K562 (cell line): ENCODE measurements at regions of chr10 and their contacts with region 1.

Region 1: DNA sequence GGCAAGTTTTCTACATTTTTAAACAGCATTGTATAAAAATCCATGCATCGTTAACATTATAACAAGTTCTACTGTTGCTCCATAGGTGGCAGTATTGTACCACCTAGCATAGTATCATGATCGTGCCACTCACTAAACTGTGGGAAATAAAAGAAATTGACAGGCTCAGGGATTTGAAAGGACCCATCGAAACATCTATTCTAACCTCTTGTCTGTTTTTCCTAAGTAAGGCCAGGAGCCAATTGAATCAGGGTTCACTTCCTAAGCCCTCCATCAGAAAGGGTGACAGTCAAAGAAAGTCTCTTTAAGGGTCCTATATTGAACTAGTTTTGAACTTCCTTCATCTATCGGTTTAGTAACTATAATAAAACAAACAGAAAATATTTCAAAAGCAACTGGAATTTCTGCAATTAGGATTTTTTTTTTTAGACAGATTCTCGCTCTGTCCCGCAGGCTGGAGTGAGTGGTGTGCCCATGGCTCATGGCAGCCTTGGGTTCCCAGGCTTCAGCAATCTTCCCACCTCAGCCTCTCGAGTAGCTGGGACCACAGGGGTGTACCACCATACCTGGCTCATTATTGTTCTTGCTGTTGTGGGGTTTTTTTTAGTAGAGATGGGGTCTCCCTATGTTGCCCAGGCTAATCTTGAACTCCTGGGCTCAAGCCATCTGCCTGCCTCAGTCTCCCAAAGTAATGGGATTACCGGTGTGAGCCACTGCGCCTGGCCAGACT is 9.4 kb downstream of the HACD1 start:
- DNase-seq: peak; percentile 47 to 71 (median 52)
- ATAC-seq: peak; percentile 94
- H3K4me3 ChIP-seq: no peak overlapping the region
- H3K27ac ChIP-seq: no peak overlapping the region
- H3K4me1 ChIP-seq: peaks cover 0 to 2% of the 10 kb centered on the region in 2 experiments; a peak in 2 of 5 replicates
- H3K27me3 ChIP-seq: no peaks in the 10 kb centered on the region
- CTCF ChIP-seq: peak; percentile 69 to 90 (median 74)
- EP300 ChIP-seq: no peak
- POLR2A ChIP-seq: no peak
- RAD21 ChIP-seq: peak; percentile 90 to 95

Region 2: GRCh38 chr10:17023386-17024298 is 584.1 kb before region 1 on chr10:
- CTCF ChIA-PET with region 1: no interaction called
- POLR2A ChIA-PET with region 1: no interaction called
- in situ Hi-C with region 1: no loop called
- intact Hi-C with region 1: no loop called
- DNase-seq: peak; percentile 27 to 86 (median 49)
- ATAC-seq: peak; percentile 94
- H3K4me3 ChIP-seq: no peak overlapping the region
- H3K27ac ChIP-seq: peak overlapping the region; percentile 35; the same call in 1 of the 3 replicates
- H3K4me1 ChIP-seq: peaks cover 4 to 22% of the 10 kb centered on the region in 2 experiments; a peak in 3 of 5 replicates
- H3K27me3 ChIP-seq: no peaks in the 10 kb centered on the region
- CTCF ChIP-seq: no peak
- EP300 ChIP-seq: peak; percentile 52; the same call in 1 of the 2 replicates
- POLR2A ChIP-seq: no peak
- RAD21 ChIP-seq: peak in 1 of 2 experiments; percentile 17; a peak in 1 of 4 replicates

Region 3: DNA sequence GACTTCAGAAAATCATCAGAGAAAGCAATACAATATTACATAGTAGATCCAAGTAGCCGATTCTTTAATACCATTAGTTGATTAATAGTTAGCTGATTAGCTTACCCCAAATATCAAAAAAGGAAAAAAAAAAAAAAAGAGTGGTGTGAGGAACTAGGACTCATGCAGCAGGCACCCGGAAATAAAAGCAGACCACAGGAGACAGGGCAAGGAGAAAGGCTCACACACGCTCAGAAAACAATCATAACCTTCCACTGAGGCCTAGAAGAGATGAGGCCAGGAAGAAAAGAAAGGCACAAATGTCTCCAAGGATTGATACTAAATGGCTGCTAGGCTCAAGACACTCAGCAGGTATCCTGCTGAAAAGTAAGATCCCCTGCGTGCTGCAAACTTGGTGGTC is 432.2 kb before region 1 on chr10:
- CTCF ChIA-PET with region 1: no interaction called
- POLR2A ChIA-PET with region 1: no interaction called
- in situ Hi-C with region 1: no loop called
- intact Hi-C with region 1: no loop called
- DNase-seq: no peak
- ATAC-seq: peak; percentile 58; the same call in 2 of the 3 replicates
- H3K4me3 ChIP-seq: no peak overlapping the region
- H3K27ac ChIP-seq: peak overlapping the region; percentile 9; the same call in 1 of the 3 replicates
- H3K4me1 ChIP-seq: peaks cover 0 to 3% of the 10 kb centered on the region in 2 experiments; a peak in 2 of 5 replicates
- H3K27me3 ChIP-seq: no peaks in the 10 kb centered on the region
- CTCF ChIP-seq: no peak
- EP300 ChIP-seq: no peak
- POLR2A ChIP-seq: no peak
- RAD21 ChIP-seq: no peak

Region 4: GRCh38 chr10:17394854-17395253 is 212.9 kb before region 1 on chr10:
- CTCF ChIA-PET with region 1: no interaction called
- POLR2A ChIA-PET with region 1: no interaction called
- in situ Hi-C with region 1: no loop called
- intact Hi-C with region 1: no loop called
- DNase-seq: peak in 1 of 4 experiments; percentile 26
- ATAC-seq: peak; percentile 61
- H3K4me3 ChIP-seq: no peak overlapping the region
- H3K27ac ChIP-seq: no peak overlapping the region
- H3K4me1 ChIP-seq: peaks cover 0 to 8% of the 10 kb centered on the region in 2 experiments; a peak in 2 of 5 replicates
- H3K27me3 ChIP-seq: no peaks in the 10 kb centered on the region
- CTCF ChIP-seq: no peak
- EP300 ChIP-seq: no peak
- POLR2A ChIP-seq: no peak
- RAD21 ChIP-seq: no peak

Region 5: GRCh38 chr10:17742918-17743317 is 135.2 kb after region 1 on chr10:
- CTCF ChIA-PET with region 1: interaction called, 10 read pairs
- POLR2A ChIA-PET with region 1: no interaction called
- in situ Hi-C with region 1: loop called (anchors 5 kb)
- intact Hi-C with region 1: loop called (anchors 1 kb)
- DNase-seq: peak; percentile 56 to 74 (median 58)
- ATAC-seq: peak; percentile 77
- H3K4me3 ChIP-seq: no peak overlapping the region
- H3K27ac ChIP-seq: no peak overlapping the region
- H3K4me1 ChIP-seq: peaks cover 4 to 5% of the 10 kb centered on the region in 2 experiments; a peak in 2 of 5 replicates
- H3K27me3 ChIP-seq: no peaks in the 10 kb centered on the region
- CTCF ChIP-seq: peak; percentile 68 to 84 (median 78)
- EP300 ChIP-seq: no peak
- POLR2A ChIP-seq: no peak
- RAD21 ChIP-seq: peak; percentile 64 to 72

Region 6: GRCh38 chr10:17847585-17848296 is 240.0 kb after region 1 on chr10:
- CTCF ChIA-PET with region 1: no interaction called
- POLR2A ChIA-PET with region 1: no interaction called
- in situ Hi-C with region 1: no loop called
- intact Hi-C with region 1: loop called (anchors 10 kb)
- DNase-seq: peak in 3 of 4 experiments; percentile 10 to 23 (median 14)
- ATAC-seq: peak; percentile 49; the same call in 1 of the 3 replicates
- H3K4me3 ChIP-seq: no peak overlapping the region
- H3K27ac ChIP-seq: no peak overlapping the region
- H3K4me1 ChIP-seq: no peaks in the 10 kb centered on the region
- H3K27me3 ChIP-seq: peaks cover 0 to 6% of the 10 kb centered on the region in 2 experiments; a peak in 4 of 5 replicates
- CTCF ChIP-seq: peak; percentile 36 to 63 (median 39); a peak in 4 of 6 replicates
- EP300 ChIP-seq: no peak
- POLR2A ChIP-seq: no peak
- RAD21 ChIP-seq: peak in 1 of 2 experiments; percentile 44; a peak in 2 of 4 replicates

Region 7: GRCh38 chr10:17872191-17873091 is 264.7 kb after region 1 on chr10:
- CTCF ChIA-PET with region 1: interaction called, 7 read pairs
- POLR2A ChIA-PET with region 1: no interaction called
- in situ Hi-C with region 1: loop called (anchors 10 kb)
- intact Hi-C with region 1: loop called (anchors 1 kb)
- DNase-seq: peak in 1 of 4 experiments; percentile 20
- ATAC-seq: 0 out of 3 replicates have a peak, but pooled peaks have one; percentile 38
- H3K4me3 ChIP-seq: no peak overlapping the region
- H3K27ac ChIP-seq: no peak overlapping the region
- H3K4me1 ChIP-seq: no peaks in the 10 kb centered on the region
- H3K27me3 ChIP-seq: no peaks in the 10 kb centered on the region; a peak in 1 of 5 replicates
- CTCF ChIP-seq: peak; percentile 29 to 70 (median 61); a peak in 5 of 6 replicates
- EP300 ChIP-seq: no peak
- POLR2A ChIP-seq: no peak
- RAD21 ChIP-seq: peak; percentile 76 to 85

Region 8: DNA sequence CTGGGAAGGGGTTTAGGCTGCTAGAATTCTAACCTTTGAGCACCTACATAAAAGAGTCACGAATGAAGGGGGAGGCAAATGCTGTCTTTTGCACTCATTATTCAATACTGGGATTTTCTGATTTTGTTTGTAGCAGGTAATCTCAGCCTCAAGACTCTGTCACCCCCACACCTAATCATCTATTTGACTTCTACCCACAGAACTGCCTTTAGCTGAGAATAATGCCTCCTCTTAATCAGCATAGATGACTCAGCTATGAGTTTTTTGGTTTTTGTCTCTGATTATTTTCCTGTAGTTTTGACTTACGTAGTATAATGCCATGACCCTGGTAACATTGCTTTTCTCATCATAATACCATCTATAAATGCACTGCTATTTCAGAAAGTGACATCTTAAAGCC is 489.8 kb after region 1 on chr10:
- CTCF ChIA-PET with region 1: interaction called, 7 read pairs
- POLR2A ChIA-PET with region 1: no interaction called
- in situ Hi-C with region 1: loop called (anchors 25 kb)
- intact Hi-C with region 1: loop called (anchors 10 kb)
- DNase-seq: no peak
- ATAC-seq: no peak
- H3K4me3 ChIP-seq: no peak overlapping the region
- H3K27ac ChIP-seq: no peak overlapping the region
- H3K4me1 ChIP-seq: no peaks in the 10 kb centered on the region
- H3K27me3 ChIP-seq: no peaks in the 10 kb centered on the region; a peak in 1 of 5 replicates
- CTCF ChIP-seq: no peak
- EP300 ChIP-seq: no peak
- POLR2A ChIP-seq: no peak
- RAD21 ChIP-seq: no peak